ENCODE measurements at regions of chr16 and their contacts with region 1.

Region 1: DNA sequence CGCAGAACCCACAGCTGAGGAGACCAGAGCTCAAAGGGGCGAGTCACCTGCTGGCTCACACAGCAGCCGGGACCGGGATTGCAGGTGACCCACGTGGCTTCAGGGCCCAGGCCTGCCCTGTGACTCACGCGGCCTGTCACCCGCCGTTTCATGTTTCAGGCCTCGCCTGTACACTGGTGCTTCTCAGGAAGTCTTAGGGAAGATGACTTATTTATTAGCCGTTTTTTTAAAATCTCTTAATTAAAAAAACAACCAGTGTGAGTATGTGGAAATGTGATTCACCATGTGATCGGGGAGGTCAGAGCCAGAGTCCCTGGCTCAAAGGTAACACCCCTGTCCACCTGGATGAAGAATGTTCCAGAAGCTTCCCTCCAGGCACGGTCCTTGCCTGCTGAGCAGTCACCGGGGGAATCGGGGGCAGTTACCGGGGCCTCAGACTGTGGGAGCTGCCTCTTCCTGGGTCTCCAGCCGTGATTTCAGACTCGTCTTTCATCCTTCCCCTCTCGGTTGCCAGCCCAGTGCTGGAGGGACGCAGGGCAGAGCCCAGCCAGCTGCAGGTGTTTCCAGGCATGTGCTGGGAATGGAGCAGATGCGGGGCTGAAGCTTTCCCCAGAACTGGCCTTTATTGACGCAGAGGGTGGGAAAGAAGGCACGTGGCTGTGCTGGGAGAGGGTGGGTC is 49.3 kb downstream of the CMIP start:
- DNase-seq: no peak

Region 2: GRCh38 chr16:81451753-81452680 is 41.9 kb before region 1 on chr16:
- in situ Hi-C with region 1: loop called (anchors 5 kb)
- DNase-seq: no peak

Measured in G401 (cell line).